ENCODE measurements at regions of chr21 and their contacts with region 1.

Region 1: GRCh38 chr21:38349111-38349746 is 92.4 kb downstream of the KCNJ15 start:
- ATAC-seq: no peak
- H3K4me3 ChIP-seq: no peak overlapping the region
- H3K27ac ChIP-seq: no peak overlapping the region
- H3K4me1 ChIP-seq: no peaks in the 10 kb centered on the region

Region 2: DNA sequence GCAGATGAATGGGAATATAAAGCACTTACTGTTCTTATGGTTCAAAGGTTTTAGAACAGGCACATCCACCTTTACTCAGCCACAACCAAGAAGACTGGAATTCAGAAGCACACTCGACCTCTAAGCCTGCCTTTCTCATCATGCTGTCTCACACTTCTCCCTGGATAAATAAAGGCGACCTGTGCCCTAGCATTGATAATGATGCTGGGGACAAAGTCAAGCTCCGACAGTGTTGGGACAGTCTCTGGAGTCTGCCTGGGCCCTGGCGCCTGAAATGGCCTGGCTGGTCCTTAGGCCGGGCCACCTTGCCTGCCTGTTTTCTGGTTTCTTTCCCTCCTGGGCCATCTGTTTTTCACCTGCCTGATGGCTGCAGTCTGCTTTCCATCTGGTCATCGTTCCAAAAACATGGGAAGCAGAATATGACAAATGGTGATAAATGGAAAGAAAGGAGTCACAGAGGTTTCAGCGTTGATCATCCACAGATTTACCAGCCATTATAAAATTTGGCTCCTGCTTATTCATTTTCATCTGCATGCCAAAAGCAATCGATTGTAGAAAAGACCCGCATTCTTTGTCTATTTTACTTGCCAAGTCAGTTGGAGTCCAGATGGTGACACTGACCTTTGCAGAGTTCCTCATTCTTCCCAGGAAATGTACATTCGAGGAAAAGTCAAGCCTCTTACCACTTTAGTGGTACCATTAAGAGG is 183.6 kb before region 1 on chr21:
- in situ Hi-C with region 1: loop called in 3 of 9 experiments (anchors 10 to 25 kb)
- ATAC-seq: peak in 3 of 8 experiments; percentile 19 to 65 (median 48)
- H3K4me3 ChIP-seq: no peak overlapping the region
- H3K27ac ChIP-seq: no peak overlapping the region
- H3K4me1 ChIP-seq: peaks cover 10 to 11% of the 10 kb centered on the region in 2 donors

Measured in motor neuron (in vitro differentiated cells).